Activated B cell treated with CpG ODN at 0.5 μM for 24 hours (primary cell): ENCODE measurements at regions of chr3 and their contacts with region 1.

Region 1: DNA sequence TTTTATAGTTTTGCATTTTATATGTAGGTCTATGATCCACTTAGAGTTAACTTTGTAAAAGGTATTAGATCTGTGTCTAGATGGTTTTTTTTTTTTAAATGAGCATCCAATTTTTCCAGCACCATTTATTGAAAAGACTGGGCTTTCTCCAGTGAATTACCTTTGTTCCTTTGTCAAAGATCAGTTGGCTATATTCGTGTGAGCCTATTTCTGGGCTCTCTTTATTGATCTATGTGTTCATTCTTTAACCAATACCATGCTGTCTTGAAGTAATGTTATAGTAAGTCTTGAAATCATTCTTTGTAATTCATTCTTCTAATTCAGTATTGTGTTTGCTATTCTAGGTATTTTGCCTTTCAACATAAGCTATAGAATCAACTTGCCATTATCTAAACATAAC is 165.4 kb upstream of the ARPP21 start:
- DNase-seq: no peak
- ATAC-seq: no peak
- H3K4me3 Mint-ChIP-seq: no peak overlapping the region
- H3K27ac Mint-ChIP-seq: no peak overlapping the region
- H3K4me1 Mint-ChIP-seq: no peaks in the 10 kb centered on the region
- H3K27me3 Mint-ChIP-seq: no peaks in the 10 kb centered on the region
- CTCF ChIP-seq: no peak

Region 2: DNA sequence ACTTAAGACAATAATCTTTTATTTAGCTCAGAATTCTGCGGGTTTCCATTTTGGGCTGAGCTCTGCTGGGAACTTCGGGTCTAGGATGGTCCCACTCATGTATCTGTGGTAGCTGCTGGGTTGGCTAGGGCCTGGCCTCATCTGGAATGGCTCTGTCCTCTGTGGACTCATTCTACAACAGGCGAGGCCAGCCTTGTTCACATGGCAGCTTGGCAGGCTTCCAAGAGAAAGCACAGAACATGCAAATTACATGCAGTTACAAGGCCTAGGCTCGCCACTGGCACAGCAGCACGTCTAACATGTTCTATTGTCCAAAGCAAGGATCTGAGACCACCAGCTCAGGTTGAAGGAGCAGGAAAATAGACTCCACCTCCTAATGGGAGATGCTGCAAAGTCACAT is 1244.1 kb before region 1 on chr3:
- CTCF ChIA-PET with region 1: no interaction called
- POLR2A ChIA-PET with region 1: no interaction called
- intact Hi-C with region 1: no loop called
- DNase-seq: no peak
- ATAC-seq: no peak
- H3K4me3 Mint-ChIP-seq: no peak overlapping the region
- H3K27ac Mint-ChIP-seq: no peak overlapping the region
- H3K4me1 Mint-ChIP-seq: no peaks in the 10 kb centered on the region
- H3K27me3 Mint-ChIP-seq: no peaks in the 10 kb centered on the region
- CTCF ChIP-seq: no peak

Region 3: GRCh38 chr3:35404571-35404970 is 69.4 kb before region 1 on chr3:
- CTCF ChIA-PET with region 1: no interaction called
- POLR2A ChIA-PET with region 1: no interaction called
- intact Hi-C with region 1: loop called (anchors 10 kb)
- DNase-seq: no peak
- ATAC-seq: no peak
- H3K4me3 Mint-ChIP-seq: no peak overlapping the region
- H3K27ac Mint-ChIP-seq: no peak overlapping the region
- H3K4me1 Mint-ChIP-seq: no peaks in the 10 kb centered on the region
- H3K27me3 Mint-ChIP-seq: no peaks in the 10 kb centered on the region
- CTCF ChIP-seq: no peak